Common myeloid progenitor, CD34-positive (primary cell): ENCODE measurements at regions of chr1 and their contacts with region 1.

Region 1: GRCh38 chr1:42335050-42335808 is at the start of gene FOXJ3:
- DNase-seq: peak; percentile 97 to 99 (median 99)
- H3K4me3 ChIP-seq: peak within 1 kb of the TSS; percentile 75 to 97 (median 91)
- H3K27ac ChIP-seq: peak within 1 kb of the TSS; percentile 88 to 93
- H3K4me1 ChIP-seq: peaks cover 4 to 28% (median 23%) of the 10 kb centered on the region in 4 experiments
- H3K27me3 ChIP-seq: no peaks in the 10 kb centered on the region

Region 2: DNA sequence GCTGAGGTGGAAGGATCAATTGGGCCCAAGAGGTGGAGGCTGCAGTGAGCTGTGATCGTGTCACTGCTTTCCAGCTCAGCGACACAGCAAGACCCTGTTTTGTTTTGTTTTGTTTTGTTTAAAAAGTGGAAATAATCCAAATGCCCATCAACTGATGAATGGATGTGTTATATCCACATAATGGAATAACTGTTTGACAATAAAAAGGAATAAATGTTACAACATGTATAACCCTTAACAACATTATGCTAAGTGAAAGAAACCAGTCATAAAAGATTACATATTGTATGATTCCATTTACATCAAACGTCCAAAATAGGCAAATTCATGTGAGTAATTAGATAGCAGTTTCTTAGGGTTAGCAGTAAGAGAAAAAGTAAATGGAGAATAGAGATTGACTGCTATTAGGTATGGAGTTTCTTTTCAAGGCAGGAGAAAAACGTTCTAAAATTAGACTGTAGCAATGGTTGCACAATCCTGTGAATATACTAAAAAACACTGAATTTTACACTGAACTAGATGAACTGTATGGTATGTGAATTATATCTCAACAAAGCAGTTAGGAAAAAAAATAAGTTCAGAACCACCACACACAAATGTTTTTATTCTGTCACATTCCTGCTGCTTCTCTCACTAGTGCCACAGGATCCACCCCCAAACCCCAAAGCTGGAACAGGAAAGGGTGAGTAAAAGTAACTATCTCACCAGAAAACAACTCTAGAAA is 15.9 kb before region 1 on chr1:
- CTCF ChIA-PET with region 1: interaction called, 16 read pairs
- POLR2A ChIA-PET with region 1: interaction called, 4 read pairs
- DNase-seq: peak in 2 of 3 donors; percentile 32 to 45
- H3K4me3 ChIP-seq: peak overlapping the region in 6 of 7 experiments; percentile 47 to 69 (median 52)
- H3K27ac ChIP-seq: peak overlapping the region; percentile 64 to 81
- H3K4me1 ChIP-seq: peaks cover 27 to 80% (median 53%) of the 10 kb centered on the region in 4 experiments
- H3K27me3 ChIP-seq: no peaks in the 10 kb centered on the region